CD4-positive, alpha-beta T cell (primary cell): ENCODE measurements at regions of chr1 and their contacts with region 1.

Region 1: DNA sequence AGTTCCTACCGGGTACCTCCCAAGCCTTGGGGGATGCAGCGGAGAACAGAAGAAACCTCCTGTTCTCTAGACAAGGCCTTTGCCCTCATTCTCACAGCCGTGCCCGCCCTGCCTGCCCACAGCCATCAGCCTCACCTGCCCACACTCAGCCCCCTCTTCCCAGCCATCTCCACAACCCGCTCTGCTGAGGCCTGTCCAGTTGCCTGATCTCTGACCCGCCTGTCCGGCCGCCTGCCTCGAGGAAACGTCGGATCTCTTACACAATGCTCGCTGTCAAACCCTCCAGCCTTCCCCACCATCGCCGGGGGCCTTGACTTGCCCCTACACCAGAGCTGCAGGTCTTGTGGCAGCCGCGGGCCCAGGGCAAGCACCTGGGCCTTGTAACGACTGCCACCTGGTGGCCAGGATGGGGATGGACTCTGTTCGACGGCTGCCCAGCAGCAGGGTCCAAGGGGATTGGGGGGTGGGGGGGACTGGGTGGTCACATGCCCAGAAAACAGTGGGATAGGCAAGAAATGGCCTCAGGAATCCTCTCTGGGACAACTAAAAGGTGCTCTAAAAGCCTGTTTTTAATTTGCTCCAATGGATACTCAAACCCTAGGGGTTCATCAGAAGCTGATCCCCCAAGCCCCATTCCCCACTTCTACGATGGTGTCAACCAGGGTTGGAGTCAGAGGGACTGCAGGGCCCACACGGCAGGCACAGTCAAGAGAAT is 31.0 kb downstream of the SLC45A1 start:
- DNase-seq: peak; percentile 60 to 84 (median 66)
- ATAC-seq: peak; percentile 96
- H3K4me3 ChIP-seq: no peak overlapping the region
- H3K4me3 Mint-ChIP-seq: no peak overlapping the region
- H3K27ac ChIP-seq: no peak overlapping the region
- H3K27ac Mint-ChIP-seq: no peak overlapping the region
- H3K4me1 ChIP-seq: peaks cover 6% of the 10 kb centered on the region
- H3K4me1 Mint-ChIP-seq: peaks cover 5% of the 10 kb centered on the region
- H3K27me3 ChIP-seq: no peaks in the 10 kb centered on the region
- H3K27me3 Mint-ChIP-seq: no peaks in the 10 kb centered on the region
- CTCF ChIP-seq: peak; percentile 83

Region 2: DNA sequence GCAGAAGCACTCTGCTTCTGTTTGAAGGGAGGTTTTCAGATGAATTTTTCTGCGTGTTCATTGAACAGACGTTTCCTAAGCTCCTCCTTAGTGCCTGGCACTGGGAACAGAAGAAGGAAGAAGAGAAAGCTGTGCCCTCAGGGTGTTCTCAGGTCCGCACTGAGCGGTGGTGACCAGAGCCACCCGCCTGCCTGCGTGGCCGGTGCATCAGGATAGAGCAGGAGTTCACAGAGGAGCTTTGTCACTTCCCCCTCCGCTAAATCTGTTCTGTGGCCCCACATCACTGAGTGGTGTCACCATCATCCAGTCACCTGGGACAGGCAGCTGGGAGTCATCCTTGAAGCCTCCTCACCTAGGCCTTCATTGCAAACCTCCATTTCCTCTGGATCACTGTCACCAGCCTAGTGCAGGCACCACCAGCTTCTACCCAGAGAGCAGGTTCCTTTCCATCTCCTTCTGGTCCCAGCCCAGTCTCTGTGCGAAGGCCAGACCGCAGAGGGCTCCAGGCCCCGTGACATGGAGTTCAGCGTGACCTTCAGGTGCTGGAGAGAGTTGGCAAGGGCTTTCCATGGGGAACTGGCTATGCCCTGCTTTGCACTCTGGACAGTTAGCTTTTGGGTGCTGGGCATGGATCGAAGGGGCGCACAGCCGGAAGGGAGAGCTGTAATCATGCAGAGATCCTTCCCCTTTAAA is 365.7 kb before region 1 on chr1:
- CTCF ChIA-PET with region 1: interaction called, 6 read pairs
- POLR2A ChIA-PET with region 1: no interaction called
- intact Hi-C with region 1: loop called (anchors 1 kb)
- DNase-seq: no peak
- ATAC-seq: no peak
- H3K4me3 ChIP-seq: no peak overlapping the region
- H3K4me3 Mint-ChIP-seq: no peak overlapping the region
- H3K27ac ChIP-seq: no peak overlapping the region
- H3K27ac Mint-ChIP-seq: no peak overlapping the region
- H3K4me1 ChIP-seq: peaks cover 6% of the 10 kb centered on the region
- H3K4me1 Mint-ChIP-seq: peaks cover 6% of the 10 kb centered on the region
- H3K27me3 ChIP-seq: no peaks in the 10 kb centered on the region
- H3K27me3 Mint-ChIP-seq: no peaks in the 10 kb centered on the region
- CTCF ChIP-seq: no peak

Region 3: DNA sequence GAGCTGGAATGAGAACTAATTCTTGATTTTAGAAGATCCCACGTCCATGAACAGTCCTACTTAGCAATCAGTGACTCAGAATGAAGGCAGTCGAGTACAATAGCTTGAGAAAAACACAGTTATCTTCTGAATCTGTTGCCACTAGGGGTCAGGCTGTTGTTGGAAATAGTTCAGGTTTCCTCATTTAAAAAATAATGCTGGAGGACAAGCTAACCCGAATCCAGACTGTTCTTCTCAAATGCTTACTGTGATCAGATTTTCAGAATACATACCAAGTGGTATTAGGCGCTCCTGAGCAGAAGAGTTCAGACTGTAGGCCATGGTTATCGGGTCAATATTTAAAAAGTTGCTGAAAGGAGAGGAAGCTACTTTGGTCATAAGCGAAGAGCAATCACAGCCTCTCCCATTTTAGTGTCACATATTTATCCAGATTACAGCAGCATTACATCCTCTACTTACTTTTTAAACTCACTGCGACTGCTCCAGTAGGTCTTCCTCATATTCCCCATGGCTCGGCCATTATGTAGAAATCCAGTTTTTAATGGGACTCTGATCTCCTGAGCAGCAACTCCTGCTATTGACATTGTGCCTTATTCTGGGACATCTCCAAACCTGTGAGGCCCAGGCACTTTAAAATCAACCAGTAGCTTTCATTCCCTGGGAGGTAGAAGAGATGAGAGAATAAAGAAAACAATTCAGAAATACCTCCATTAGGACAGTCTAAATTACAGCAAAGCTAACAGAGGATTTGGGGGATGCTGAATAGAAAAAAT is 333.7 kb before region 1 on chr1:
- CTCF ChIA-PET with region 1: interaction called, 31 read pairs
- POLR2A ChIA-PET with region 1: interaction called, 11 read pairs
- intact Hi-C with region 1: loop called (anchors 1 kb)
- DNase-seq: peak in 8 of 14 experiments; percentile 15 to 76 (median 44)
- ATAC-seq: peak; percentile 70
- H3K4me3 ChIP-seq: no peak overlapping the region
- H3K4me3 Mint-ChIP-seq: no peak overlapping the region
- H3K27ac ChIP-seq: no peak overlapping the region
- H3K27ac Mint-ChIP-seq: no peak overlapping the region
- H3K4me1 ChIP-seq: no peaks in the 10 kb centered on the region
- H3K4me1 Mint-ChIP-seq: no peaks in the 10 kb centered on the region
- H3K27me3 ChIP-seq: peaks cover 4 to 16% of the 10 kb centered on the region in 2 experiments
- H3K27me3 Mint-ChIP-seq: peaks cover 36% of the 10 kb centered on the region
- CTCF ChIP-seq: peak; percentile 73

Region 4: GRCh38 chr1:8314346-8315280 is 34.3 kb before region 1 on chr1:
- CTCF ChIA-PET with region 1: interaction called, 4 read pairs
- POLR2A ChIA-PET with region 1: no interaction called
- intact Hi-C with region 1: loop called in 1 of 2 experiments (anchors 2 kb)
- DNase-seq: peak; percentile 29 to 75 (median 46)
- ATAC-seq: peak; percentile 30
- H3K4me3 ChIP-seq: no peak overlapping the region
- H3K4me3 Mint-ChIP-seq: no peak overlapping the region
- H3K27ac ChIP-seq: no peak overlapping the region
- H3K27ac Mint-ChIP-seq: no peak overlapping the region
- H3K4me1 ChIP-seq: peaks cover 29% of the 10 kb centered on the region
- H3K4me1 Mint-ChIP-seq: peaks cover 21% of the 10 kb centered on the region
- H3K27me3 ChIP-seq: peaks cover 17 to 21% of the 10 kb centered on the region in 2 experiments
- H3K27me3 Mint-ChIP-seq: peaks cover 34% of the 10 kb centered on the region
- CTCF ChIP-seq: peak; percentile 74